Posterior vena cava (tissue), 2 donors: ENCODE measurements at regions of chr12 and their contacts with region 1.

Region 1: GRCh38 chr12:75349946-75350345 is 15.5 kb downstream of the GLIPR1L1 start:
- DNase-seq: no peak

Region 2: GRCh38 chr12:75322464-75322863 is 27.5 kb before region 1 on chr12:
- intact Hi-C with region 1: loop called in 1 of 2 experiments (anchors 1 kb)
- DNase-seq: no peak